CD8-positive, alpha-beta memory T cell (primary cell): ENCODE measurements at regions of chr2 and their contacts with region 1.

Region 1: GRCh38 chr2:134245340-134245984 is 8.4 kb upstream of the MGAT5 start:
- DNase-seq: peak; percentile 58 to 80 (median 62)
- H3K4me3 ChIP-seq: no peak overlapping the region
- H3K4me3 Mint-ChIP-seq: peak overlapping the region in 5 of 7 donors; percentile 4 to 44 (median 39)
- H3K27ac ChIP-seq: no peak overlapping the region
- H3K27ac Mint-ChIP-seq: peak overlapping the region in 7 of 8 donors; percentile 8 to 83 (median 63)
- H3K4me1 ChIP-seq: peaks cover 78% of the 10 kb centered on the region
- H3K4me1 Mint-ChIP-seq: peaks cover 80 to 97% (median 97%) of the 10 kb centered on the region in 3 donors
- H3K27me3 ChIP-seq: no peaks in the 10 kb centered on the region
- H3K27me3 Mint-ChIP-seq: no peaks in the 10 kb centered on the region

Region 2: DNA sequence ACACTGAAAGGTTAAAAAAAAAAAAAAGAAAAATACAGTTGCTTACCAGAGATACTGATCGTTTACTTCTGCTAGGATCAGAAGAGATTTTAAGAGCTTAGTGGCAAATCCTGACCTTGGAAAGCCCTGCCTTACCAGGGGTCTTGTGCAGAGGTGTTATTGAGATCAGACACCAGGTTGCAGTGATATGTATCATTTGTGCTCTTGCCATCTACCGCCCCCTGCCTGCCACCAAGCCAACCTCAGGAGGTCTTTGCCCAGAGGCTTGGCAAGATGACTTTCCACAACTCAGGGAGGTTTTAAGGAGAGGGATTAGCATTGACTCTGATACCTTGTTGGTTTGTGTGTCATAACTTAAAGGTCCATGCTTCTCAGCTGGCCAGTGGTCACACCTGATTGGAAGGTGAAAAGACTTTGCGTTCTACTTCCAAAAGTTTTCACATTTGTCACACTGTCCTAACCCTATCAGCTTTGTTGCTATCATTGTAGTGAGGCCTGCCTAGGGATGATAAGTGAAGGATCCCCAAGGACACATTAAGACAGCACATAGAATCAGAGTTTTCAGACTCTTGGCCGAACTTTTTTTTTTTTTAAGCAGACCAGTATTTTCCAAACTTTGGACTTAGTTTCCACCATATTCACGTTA is 37.8 kb before region 1 on chr2:
- CTCF ChIA-PET with region 1: interaction called, 20 read pairs
- POLR2A ChIA-PET with region 1: no interaction called
- DNase-seq: peak; percentile 45 to 73 (median 47)
- H3K4me3 ChIP-seq: no peak overlapping the region
- H3K4me3 Mint-ChIP-seq: peak overlapping the region in 1 of 7 donors; percentile 23
- H3K27ac ChIP-seq: no peak overlapping the region
- H3K27ac Mint-ChIP-seq: peak overlapping the region; percentile 6 to 66 (median 28)
- H3K4me1 ChIP-seq: peaks cover 34% of the 10 kb centered on the region
- H3K4me1 Mint-ChIP-seq: peaks cover 13 to 15% (median 15%) of the 10 kb centered on the region in 3 donors
- H3K27me3 ChIP-seq: no peaks in the 10 kb centered on the region
- H3K27me3 Mint-ChIP-seq: no peaks in the 10 kb centered on the region

Region 3: GRCh38 chr2:134218930-134219658 is 26.4 kb before region 1 on chr2:
- CTCF ChIA-PET with region 1: interaction called, 15 read pairs
- POLR2A ChIA-PET with region 1: no interaction called
- DNase-seq: peak; percentile 6 to 63 (median 37)
- H3K4me3 ChIP-seq: peak overlapping the region; percentile 29
- H3K4me3 Mint-ChIP-seq: peak overlapping the region in 6 of 7 donors; percentile 67 to 82 (median 76)
- H3K27ac ChIP-seq: no peak overlapping the region
- H3K27ac Mint-ChIP-seq: peak overlapping the region; percentile 72 to 96 (median 92)
- H3K4me1 ChIP-seq: peaks cover 43% of the 10 kb centered on the region
- H3K4me1 Mint-ChIP-seq: peaks cover 60 to 88% (median 71%) of the 10 kb centered on the region in 3 donors
- H3K27me3 ChIP-seq: no peaks in the 10 kb centered on the region
- H3K27me3 Mint-ChIP-seq: peaks cover 0 to 2% of the 10 kb centered on the region in 2 donors

Region 4: DNA sequence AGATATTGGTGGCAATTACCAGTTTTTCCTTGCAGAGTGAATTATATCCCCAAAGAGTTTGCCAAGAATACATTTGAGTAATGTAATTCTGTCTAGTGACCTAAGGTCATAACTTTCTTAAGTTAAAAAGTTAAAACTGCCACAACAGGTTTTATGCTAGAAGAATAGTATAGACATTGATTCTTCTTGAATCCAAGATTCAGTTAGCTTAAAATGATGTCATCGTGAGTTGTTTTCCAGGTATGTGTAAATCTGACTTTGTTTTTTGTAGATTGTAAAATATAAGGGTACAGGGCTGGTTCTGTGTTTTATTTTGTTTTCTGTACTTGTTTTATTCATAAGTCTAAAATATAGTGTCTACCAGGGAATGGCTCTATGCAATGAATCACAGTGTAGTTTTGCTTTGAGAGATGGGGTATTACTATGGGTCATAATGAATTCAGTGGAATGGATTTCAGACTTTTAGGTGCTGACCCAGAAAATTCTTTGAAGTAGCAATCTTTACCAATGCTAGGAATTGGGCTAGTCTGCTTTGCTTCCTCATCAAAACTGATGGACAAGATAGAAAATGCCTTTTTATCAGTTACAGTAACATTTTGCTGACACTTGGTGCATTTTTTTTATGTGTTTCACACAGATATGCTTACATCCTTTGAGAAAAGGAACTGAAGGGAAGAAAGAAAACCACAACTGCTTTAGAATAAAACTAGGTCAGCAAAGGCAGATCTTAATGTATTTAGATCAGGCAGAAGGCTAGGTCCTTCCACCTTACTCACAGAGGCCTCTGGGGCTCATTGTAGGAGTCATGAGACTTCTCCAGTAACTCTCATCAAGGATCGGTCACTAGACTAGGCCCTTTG is 12.4 kb before region 1 on chr2:
- CTCF ChIA-PET with region 1: interaction called, 49 read pairs
- POLR2A ChIA-PET with region 1: no interaction called
- DNase-seq: peak in 2 of 5 donors; percentile 46 to 64
- H3K4me3 ChIP-seq: peak overlapping the region; percentile 11
- H3K4me3 Mint-ChIP-seq: peak overlapping the region; percentile 49 to 88 (median 70)
- H3K27ac ChIP-seq: peak overlapping the region; percentile 26
- H3K27ac Mint-ChIP-seq: peak overlapping the region; percentile 72 to 98 (median 90)
- H3K4me1 ChIP-seq: peaks cover 63% of the 10 kb centered on the region
- H3K4me1 Mint-ChIP-seq: peaks cover 86 to 94% (median 90%) of the 10 kb centered on the region in 3 donors
- H3K27me3 ChIP-seq: no peaks in the 10 kb centered on the region
- H3K27me3 Mint-ChIP-seq: no peaks in the 10 kb centered on the region

Region 5: GRCh38 chr2:134261398-134262131 is 16.1 kb after region 1 on chr2:
- CTCF ChIA-PET with region 1: interaction called, 15 read pairs
- POLR2A ChIA-PET with region 1: no interaction called
- DNase-seq: no peak
- H3K4me3 ChIP-seq: no peak overlapping the region
- H3K4me3 Mint-ChIP-seq: peak overlapping the region in 2 of 7 donors; percentile 12 to 39
- H3K27ac ChIP-seq: no peak overlapping the region
- H3K27ac Mint-ChIP-seq: peak overlapping the region in 5 of 8 donors; percentile 29 to 70 (median 64)
- H3K4me1 ChIP-seq: peaks cover 66% of the 10 kb centered on the region
- H3K4me1 Mint-ChIP-seq: peaks cover 60 to 81% (median 78%) of the 10 kb centered on the region in 3 donors
- H3K27me3 ChIP-seq: no peaks in the 10 kb centered on the region
- H3K27me3 Mint-ChIP-seq: no peaks in the 10 kb centered on the region

Region 6: GRCh38 chr2:134268265-134268664 is 22.8 kb after region 1 on chr2:
- CTCF ChIA-PET with region 1: interaction called, 15 read pairs
- POLR2A ChIA-PET with region 1: no interaction called
- DNase-seq: no peak
- H3K4me3 ChIP-seq: no peak overlapping the region
- H3K4me3 Mint-ChIP-seq: no peak overlapping the region
- H3K27ac ChIP-seq: no peak overlapping the region
- H3K27ac Mint-ChIP-seq: no peak overlapping the region
- H3K4me1 ChIP-seq: peaks cover 16% of the 10 kb centered on the region
- H3K4me1 Mint-ChIP-seq: peaks cover 31 to 75% (median 66%) of the 10 kb centered on the region in 3 donors
- H3K27me3 ChIP-seq: no peaks in the 10 kb centered on the region
- H3K27me3 Mint-ChIP-seq: no peaks in the 10 kb centered on the region

Region 7: DNA sequence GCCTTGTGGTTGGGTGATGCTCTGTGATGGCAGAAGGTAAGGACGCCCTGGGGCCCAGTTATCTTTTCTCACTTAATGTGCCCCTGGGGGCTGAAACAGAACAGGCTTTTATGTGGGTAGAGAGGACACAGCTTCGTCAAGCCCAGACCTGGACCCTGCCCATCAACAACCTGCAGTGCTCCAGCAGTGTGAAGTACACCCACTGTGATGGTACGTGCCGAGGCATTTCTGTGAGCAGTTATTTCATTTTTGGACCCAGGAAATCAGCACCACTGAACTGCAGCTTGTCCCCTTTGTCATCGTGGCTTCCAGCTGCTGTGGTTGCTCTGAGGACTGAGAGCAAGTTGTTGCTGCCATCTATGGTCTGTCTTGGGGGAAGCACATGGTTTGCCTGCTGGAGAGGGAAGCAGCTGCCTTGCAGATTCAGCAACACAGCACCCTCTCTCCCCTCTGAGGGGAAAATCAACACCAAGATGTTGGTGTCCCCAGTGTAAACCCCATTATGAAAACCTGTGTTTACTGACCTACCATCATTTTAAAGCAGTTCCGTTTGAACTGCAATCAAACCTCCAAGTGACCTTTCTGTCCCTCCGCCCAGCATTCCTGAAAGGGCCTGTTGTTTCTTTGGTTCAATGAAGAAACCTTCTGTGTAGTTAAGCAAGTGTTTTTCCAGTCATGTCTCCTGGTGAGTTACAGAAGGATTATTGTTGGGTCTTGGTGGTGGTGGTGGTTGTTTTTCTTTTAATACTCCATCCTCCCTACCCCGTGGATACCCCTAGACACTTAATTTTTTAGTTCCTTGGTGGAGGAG is 166.6 kb after region 1 on chr2:
- CTCF ChIA-PET with region 1: interaction called, 22 read pairs
- POLR2A ChIA-PET with region 1: no interaction called
- DNase-seq: peak; percentile 26 to 80 (median 56)
- H3K4me3 ChIP-seq: no peak overlapping the region
- H3K4me3 Mint-ChIP-seq: peak overlapping the region in 3 of 7 donors; percentile 9 to 51 (median 22)
- H3K27ac ChIP-seq: no peak overlapping the region
- H3K27ac Mint-ChIP-seq: peak overlapping the region in 3 of 8 donors; percentile 25 to 66 (median 62)
- H3K4me1 ChIP-seq: peaks cover 25% of the 10 kb centered on the region
- H3K4me1 Mint-ChIP-seq: peaks cover 48 to 54% (median 54%) of the 10 kb centered on the region in 3 donors
- H3K27me3 ChIP-seq: no peaks in the 10 kb centered on the region
- H3K27me3 Mint-ChIP-seq: no peaks in the 10 kb centered on the region